Activated T-helper 1 cell treated with anti-CD3 and anti-CD28 coated beads, Interleukin-12 subunit alpha, Interleukin-12 subunit beta, Interleukin-2, Interleukin-4 antibody, amounts not matched to agents 30 ng/mL and 10 ng/mL and 1 ng/mL, durations not matched to agents 14 hours and 24 hours and 36 hours (primary cell): ENCODE measurements at regions of chr9 and their contacts with region 1.

Region 1: DNA sequence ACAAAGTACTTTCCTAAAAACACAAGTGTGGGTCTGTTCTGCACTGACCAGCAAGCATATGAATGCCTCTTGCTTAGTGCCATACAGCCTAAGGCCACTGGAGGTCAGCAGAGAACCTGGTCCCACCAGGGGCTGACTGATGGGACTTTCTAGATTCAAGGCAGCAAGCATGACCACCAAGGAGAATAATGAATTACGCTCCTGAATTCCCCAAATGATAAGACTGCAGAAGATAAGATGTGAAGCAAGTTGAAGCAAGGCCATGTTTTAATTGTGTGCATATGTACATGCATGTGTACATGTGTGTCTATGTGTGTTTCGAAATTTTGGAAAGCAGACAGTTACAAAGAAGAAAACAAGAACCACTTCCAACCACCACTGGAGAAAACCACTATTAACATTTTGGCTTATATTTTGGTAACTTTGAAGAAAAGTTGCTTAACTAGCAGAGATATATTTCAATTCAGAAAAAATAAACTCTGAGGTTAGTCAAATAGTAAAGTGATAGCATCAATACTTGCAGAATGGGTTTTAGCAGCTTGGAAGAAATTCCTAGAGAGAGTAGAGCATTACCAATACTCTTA is 70.5 kb downstream of the ERP44 start:
- DNase-seq: peak; percentile 43
- H3K4me3 Mint-ChIP-seq: no peak overlapping the region
- H3K27ac Mint-ChIP-seq: no peak overlapping the region
- H3K4me1 Mint-ChIP-seq: peaks cover 14% of the 10 kb centered on the region
- H3K27me3 Mint-ChIP-seq: no peaks in the 10 kb centered on the region

Region 2: GRCh38 chr9:99906403-99907207 is 121.7 kb before region 1 on chr9 and contains the start of gene STX17:
- intact Hi-C with region 1: no loop called
- DNase-seq: peak; percentile 72
- H3K4me3 Mint-ChIP-seq: peak within 1 kb of the TSS; percentile 96
- H3K27ac Mint-ChIP-seq: peak within 1 kb of the TSS; percentile 96
- H3K4me1 Mint-ChIP-seq: peaks cover 33% of the 10 kb centered on the region
- H3K27me3 Mint-ChIP-seq: peaks cover 13% of the 10 kb centered on the region
- total RNA-seq, gene STX17: 20.5 and 22.1 TPM in 2 replicates

Region 3: DNA sequence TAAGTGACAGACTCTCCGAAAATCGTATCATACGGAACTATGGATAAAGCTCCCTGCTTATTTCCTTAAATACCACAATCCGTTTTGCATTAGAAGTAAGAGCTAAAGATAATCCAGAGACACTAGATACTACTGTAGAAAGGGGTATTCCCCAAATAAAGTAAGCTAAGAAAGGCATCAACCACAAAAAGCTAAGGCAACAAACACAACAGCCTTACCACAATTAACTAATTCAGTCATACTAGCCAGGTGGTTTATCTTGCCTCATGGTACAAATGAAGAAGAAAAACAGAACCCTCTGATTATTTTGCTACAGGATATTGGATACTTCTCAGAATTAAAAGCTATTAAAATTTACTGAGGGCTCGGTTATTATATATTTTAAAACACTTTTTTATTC is 56.4 kb after region 1 on chr9:
- intact Hi-C with region 1: loop called (anchors 5 kb)
- DNase-seq: no peak
- H3K4me3 Mint-ChIP-seq: peak overlapping the region; percentile 23
- H3K27ac Mint-ChIP-seq: no peak overlapping the region
- H3K4me1 Mint-ChIP-seq: peaks cover 64% of the 10 kb centered on the region
- H3K27me3 Mint-ChIP-seq: peaks cover 2% of the 10 kb centered on the region

Region 4: GRCh38 chr9:100322954-100323536 is 294.8 kb after region 1 on chr9:
- intact Hi-C with region 1: loop called (anchors 1 kb)
- DNase-seq: no peak
- H3K4me3 Mint-ChIP-seq: no peak overlapping the region
- H3K27ac Mint-ChIP-seq: no peak overlapping the region
- H3K4me1 Mint-ChIP-seq: peaks cover 5% of the 10 kb centered on the region
- H3K27me3 Mint-ChIP-seq: no peaks in the 10 kb centered on the region

Region 5: DNA sequence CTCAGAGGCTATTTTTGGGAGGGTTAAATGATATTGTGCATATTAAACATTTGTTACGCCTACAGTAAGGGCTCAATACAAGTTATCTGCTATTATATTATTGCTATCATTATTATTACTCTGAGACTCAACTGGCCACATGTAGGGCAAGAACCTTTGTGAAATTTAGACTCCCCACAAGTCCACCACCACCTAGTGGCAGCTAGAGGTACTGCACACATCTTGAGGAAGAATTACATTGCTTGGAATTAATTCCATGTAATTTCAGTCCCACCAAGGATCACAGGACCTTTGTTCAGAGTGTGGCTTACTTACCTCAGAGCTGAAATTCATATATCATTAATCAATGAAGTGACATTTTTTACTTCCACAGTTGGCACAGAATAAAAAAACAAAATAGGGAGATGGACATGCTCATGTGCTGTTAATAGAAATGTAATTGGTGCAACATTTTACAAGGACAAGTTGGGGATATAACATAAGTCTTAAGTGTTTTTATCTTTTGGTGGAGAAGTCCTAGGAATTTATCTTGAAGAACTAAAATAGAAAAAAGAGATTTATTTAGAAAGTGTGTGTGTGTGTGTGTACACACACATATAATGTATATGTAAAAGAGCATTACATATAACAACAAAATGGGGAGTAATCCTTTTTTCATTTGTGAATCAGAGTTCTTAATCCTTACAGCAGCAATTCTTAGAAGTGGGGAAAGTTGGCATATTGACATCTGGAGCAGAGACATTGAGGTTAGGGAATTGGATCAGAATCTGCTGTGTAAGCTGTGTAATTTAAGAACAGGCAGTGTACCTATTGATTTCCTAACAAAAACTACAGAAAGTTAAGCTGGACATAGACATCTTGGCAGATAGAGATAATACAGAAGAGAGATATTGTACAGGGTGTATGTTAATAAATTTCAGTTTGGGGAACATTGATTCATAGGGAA is 409.8 kb after region 1 on chr9:
- intact Hi-C with region 1: loop called (anchors 5 kb)
- DNase-seq: peak; percentile 47
- H3K4me3 Mint-ChIP-seq: no peak overlapping the region
- H3K27ac Mint-ChIP-seq: no peak overlapping the region
- H3K4me1 Mint-ChIP-seq: no peaks in the 10 kb centered on the region
- H3K27me3 Mint-ChIP-seq: peaks cover 2% of the 10 kb centered on the region